K562 (cell line): ENCODE measurements at regions of chr1 and their contacts with region 1.

Region 1: DNA sequence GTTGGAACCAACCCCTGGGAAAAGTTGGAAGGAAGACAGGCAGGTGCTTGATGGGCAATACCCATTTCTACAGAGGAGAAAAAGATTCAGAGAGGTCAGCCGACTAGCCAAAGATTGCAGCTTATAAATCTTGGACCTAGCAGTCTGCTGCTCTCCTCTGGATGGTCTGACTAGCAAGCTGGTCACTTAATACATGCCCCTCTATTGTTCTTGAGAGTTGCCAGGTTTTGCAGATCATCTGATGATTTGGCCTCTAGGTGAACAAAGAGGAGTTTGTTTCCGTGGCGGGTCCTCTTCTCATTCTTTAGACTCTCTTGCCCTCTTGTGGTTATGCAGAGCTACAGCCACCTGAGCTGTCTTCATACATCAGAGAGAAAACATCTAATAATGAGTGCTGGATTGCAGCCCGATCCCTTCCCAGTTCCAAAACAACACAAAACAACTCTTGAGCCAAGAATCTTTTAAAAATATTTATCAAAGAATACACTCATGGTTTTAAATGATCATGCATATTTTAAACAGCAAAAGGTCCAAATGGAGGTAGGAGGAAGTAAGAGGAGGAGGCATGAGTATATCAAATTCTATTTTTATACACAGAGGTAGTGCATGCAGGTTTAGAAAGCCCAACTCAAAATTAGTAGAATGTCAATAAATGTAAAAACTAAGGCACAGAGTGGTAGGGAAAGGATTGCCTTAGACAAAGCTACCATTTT is 115.7 kb downstream of the SLC30A10 start:
- DNase-seq: peak; percentile 72 to 81 (median 76)
- ATAC-seq: peak; percentile 97
- H3K4me3 ChIP-seq: no peak overlapping the region
- H3K27ac ChIP-seq: no peak overlapping the region
- H3K4me1 ChIP-seq: no peaks in the 10 kb centered on the region
- H3K27me3 ChIP-seq: peaks cover 15 to 33% of the 10 kb centered on the region in 2 experiments; a peak in 3 of 5 replicates
- CTCF ChIP-seq: peak; percentile 89 to 97 (median 96)
- EP300 ChIP-seq: no peak
- POLR2A ChIP-seq: no peak
- RAD21 ChIP-seq: peak; percentile 94 to 97

Region 2: DNA sequence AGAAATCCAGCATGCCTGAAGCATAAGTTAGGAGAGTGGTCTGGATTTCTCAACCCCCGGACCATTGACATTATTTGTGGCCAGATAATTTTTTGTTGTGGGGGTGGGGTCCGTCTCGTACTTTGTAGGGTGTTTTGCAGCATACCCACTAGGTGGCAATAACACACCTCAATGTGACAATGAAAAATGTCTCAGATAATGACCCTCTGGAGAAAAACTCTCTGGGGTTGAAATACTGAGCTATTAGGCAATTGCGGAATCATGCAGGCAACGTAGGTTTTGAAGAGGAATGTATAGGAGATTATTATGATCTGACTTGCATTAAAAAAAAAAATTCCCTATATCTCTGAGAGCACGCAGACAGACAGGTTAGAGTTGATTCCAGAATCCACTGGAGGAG is 1552.8 kb before region 1 on chr1:
- CTCF ChIA-PET with region 1: no interaction called
- POLR2A ChIA-PET with region 1: no interaction called
- in situ Hi-C with region 1: no loop called
- intact Hi-C with region 1: loop called (anchors 10 kb)
- DNase-seq: peak; percentile 33 to 69 (median 51)
- ATAC-seq: peak; percentile 96
- H3K4me3 ChIP-seq: no peak overlapping the region
- H3K27ac ChIP-seq: no peak overlapping the region
- H3K4me1 ChIP-seq: no peaks in the 10 kb centered on the region
- H3K27me3 ChIP-seq: peaks cover 0 to 3% of the 10 kb centered on the region in 2 experiments; a peak in 1 of 5 replicates
- CTCF ChIP-seq: peak; percentile 62 to 72 (median 68)
- EP300 ChIP-seq: no peak
- POLR2A ChIP-seq: no peak
- RAD21 ChIP-seq: peak; percentile 15 to 71; a peak in 3 of 4 replicates

Region 3: GRCh38 chr1:218557731-218558130 is 1254.9 kb before region 1 on chr1:
- CTCF ChIA-PET with region 1: no interaction called
- POLR2A ChIA-PET with region 1: no interaction called
- in situ Hi-C with region 1: no loop called
- intact Hi-C with region 1: loop called (anchors 10 kb)
- DNase-seq: peak in 1 of 4 experiments; percentile 6
- ATAC-seq: no peak
- H3K4me3 ChIP-seq: no peak overlapping the region
- H3K27ac ChIP-seq: no peak overlapping the region
- H3K4me1 ChIP-seq: no peaks in the 10 kb centered on the region; a peak in 1 of 5 replicates
- H3K27me3 ChIP-seq: no peaks in the 10 kb centered on the region
- CTCF ChIP-seq: no peak
- EP300 ChIP-seq: no peak
- POLR2A ChIP-seq: no peak
- RAD21 ChIP-seq: no peak

Region 4: DNA sequence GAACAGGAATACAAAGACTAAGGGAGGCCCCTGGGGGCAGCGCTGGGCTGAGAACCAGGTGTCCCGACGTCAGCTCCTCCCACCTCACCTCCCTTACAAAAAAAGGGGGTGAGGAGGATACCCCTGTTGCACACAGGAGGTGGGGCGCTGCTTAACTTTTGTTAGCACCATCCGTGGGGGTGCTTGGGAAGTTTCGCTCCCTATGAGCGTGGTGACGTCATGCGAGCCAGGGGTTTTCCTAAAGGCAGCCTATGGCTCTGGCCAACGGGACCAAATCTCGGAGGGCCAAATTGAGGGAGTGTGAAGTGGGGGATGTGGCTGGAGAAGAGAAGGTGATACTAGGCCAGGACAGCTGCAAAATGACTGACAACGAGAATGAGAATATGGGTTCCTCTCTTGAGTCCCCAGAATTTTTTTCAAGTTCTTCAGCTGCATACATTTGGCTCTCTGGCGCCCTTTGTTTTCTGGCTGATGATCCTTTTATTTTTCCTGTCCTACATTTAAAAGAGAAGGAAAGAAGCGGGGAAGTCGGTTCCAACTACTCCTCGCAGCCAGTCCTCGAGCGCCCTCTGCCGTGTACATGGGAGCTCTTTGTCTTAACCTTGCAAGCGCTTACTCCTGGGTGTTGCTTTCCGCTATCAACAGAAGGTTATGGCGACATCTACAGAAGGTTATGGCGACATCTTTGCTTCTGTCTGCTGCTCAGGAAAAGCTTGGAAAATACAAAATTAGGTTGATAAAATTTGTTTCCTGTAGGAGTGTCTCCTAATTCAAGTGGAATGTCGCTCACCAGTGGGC is 151.8 kb before region 1 on chr1:
- CTCF ChIA-PET with region 1: interaction called, 3 read pairs
- POLR2A ChIA-PET with region 1: no interaction called
- in situ Hi-C with region 1: no loop called
- intact Hi-C with region 1: loop called (anchors 2 kb)
- DNase-seq: peak; percentile 76 to 91 (median 78)
- ATAC-seq: peak; percentile 98
- H3K4me3 ChIP-seq: no peak overlapping the region
- H3K27ac ChIP-seq: no peak overlapping the region
- H3K4me1 ChIP-seq: peaks cover 0 to 7% of the 10 kb centered on the region in 2 experiments; a peak in 4 of 5 replicates
- H3K27me3 ChIP-seq: no peaks in the 10 kb centered on the region
- CTCF ChIP-seq: peak; percentile 95 to 96 (median 95)
- EP300 ChIP-seq: no peak
- POLR2A ChIP-seq: no peak
- RAD21 ChIP-seq: peak; percentile 88 to 94

Region 5: DNA sequence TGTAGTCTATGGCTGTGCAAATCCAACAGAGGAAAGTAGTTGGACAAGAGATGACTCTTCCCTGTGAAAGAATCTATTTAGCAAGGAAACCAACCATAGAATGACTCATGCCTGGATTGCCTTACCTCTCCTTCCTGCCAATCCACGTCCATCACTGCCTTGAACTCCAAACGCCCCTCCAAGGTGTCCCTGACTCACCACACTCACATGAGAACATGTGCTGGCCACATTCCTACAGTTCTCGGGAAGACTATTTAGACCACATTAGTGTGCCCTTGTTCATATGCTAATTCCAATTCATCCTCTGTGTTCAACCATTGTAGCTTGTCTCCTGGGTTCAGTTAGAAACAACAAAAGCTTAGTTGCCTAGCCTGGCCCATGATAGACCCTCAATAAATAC is 41.6 kb before region 1 on chr1:
- CTCF ChIA-PET with region 1: interaction called, 5 read pairs
- POLR2A ChIA-PET with region 1: no interaction called
- in situ Hi-C with region 1: no loop called
- intact Hi-C with region 1: loop called (anchors 5 kb)
- DNase-seq: no peak
- ATAC-seq: no peak
- H3K4me3 ChIP-seq: no peak overlapping the region
- H3K27ac ChIP-seq: no peak overlapping the region
- H3K4me1 ChIP-seq: no peaks in the 10 kb centered on the region
- H3K27me3 ChIP-seq: no peaks in the 10 kb centered on the region; a peak in 2 of 5 replicates
- CTCF ChIP-seq: no peak
- EP300 ChIP-seq: no peak
- POLR2A ChIP-seq: no peak
- RAD21 ChIP-seq: no peak